Activated naive CD4-positive, alpha-beta T cell treated with anti-CD3 and anti-CD28 coated beads, Interleukin-2, amount 10 ng/mL, durations not matched to agents 7 days and 5 days (primary cell): ENCODE measurements at regions of chr20 and their contacts with region 1.

Region 1: DNA sequence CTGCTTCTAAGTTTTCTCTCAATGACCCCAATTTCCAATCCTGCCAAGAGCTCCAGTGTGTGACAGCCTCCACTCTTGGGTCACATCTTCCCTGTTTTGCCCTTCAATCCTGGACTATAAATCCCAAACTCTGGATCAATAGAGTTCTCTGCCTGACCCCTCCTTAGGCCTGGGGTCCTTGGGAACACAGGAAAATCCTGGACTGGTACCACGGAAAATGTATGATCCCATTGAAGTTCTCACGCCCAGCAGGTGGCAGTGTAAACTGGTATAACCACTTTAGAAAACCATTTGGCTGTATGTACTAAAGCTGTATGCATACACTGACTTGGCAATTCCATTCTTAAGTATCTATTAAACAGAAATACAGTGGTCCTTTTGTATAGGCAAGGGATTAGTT is 98.0 kb downstream of the SNAP25 start:
- DNase-seq: peak; percentile 24
- H3K4me3 Mint-ChIP-seq: no peak overlapping the region
- H3K27ac Mint-ChIP-seq: no peak overlapping the region
- H3K4me1 Mint-ChIP-seq: no peaks in the 10 kb centered on the region
- H3K27me3 Mint-ChIP-seq: peaks cover 3% of the 10 kb centered on the region

Region 2: DNA sequence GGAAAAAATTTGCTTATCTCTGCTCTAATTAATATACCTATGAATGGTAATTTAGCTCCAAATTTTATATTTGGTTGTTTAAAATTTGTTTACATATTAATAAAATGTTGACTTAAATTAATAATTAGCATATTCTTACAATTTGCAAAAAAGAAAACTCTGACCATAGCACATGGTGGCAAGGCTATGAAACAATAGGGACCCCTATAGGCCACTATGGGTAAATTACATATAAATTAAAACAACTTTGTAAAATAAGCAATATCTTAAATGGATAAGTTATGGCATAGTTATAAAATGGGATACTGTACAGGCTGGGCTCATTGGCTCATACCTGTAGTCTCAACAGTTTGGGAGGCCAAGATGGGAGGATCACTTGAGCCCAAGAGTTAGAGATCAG is 41.4 kb after region 1 on chr20:
- CTCF ChIA-PET with region 1: interaction called, 18 read pairs
- DNase-seq: no peak
- H3K4me3 Mint-ChIP-seq: no peak overlapping the region
- H3K27ac Mint-ChIP-seq: no peak overlapping the region
- H3K4me1 Mint-ChIP-seq: no peaks in the 10 kb centered on the region
- H3K27me3 Mint-ChIP-seq: no peaks in the 10 kb centered on the region

Region 3: DNA sequence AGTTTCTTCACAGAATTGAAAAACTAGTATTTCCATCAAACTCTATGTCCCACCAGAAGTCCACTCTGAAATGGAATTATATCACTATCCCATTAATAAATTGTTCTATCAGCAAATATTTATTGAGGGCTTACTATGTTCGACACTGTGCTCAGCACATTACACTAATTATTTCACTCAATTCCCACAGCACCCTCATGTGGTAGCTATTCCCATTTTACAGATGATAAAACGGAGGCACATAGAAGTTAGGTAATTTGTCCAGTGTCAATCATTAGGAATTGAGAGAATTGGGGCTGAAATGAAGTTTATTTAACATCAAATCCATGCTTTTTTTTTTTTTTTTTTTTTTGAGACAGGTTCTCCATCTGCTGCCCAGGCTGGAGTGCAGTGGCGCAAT is 64.9 kb after region 1 on chr20:
- CTCF ChIA-PET with region 1: interaction called, 10 read pairs
- DNase-seq: no peak
- H3K4me3 Mint-ChIP-seq: no peak overlapping the region
- H3K27ac Mint-ChIP-seq: no peak overlapping the region
- H3K4me1 Mint-ChIP-seq: no peaks in the 10 kb centered on the region
- H3K27me3 Mint-ChIP-seq: peaks cover 2% of the 10 kb centered on the region

Region 4: GRCh38 chr20:10536531-10536930 is 219.9 kb after region 1 on chr20:
- CTCF ChIA-PET with region 1: interaction called, 10 read pairs
- DNase-seq: peak; percentile 64
- H3K4me3 Mint-ChIP-seq: no peak overlapping the region
- H3K27ac Mint-ChIP-seq: no peak overlapping the region
- H3K4me1 Mint-ChIP-seq: peaks cover 15% of the 10 kb centered on the region
- H3K27me3 Mint-ChIP-seq: no peaks in the 10 kb centered on the region